ENCODE measurements at regions of chr14 and their contacts with region 1.

Region 1: GRCh38 chr14:49633640-49634546 is 1.2 kb downstream of the DNAAF2 start:
- DNase-seq: peak; percentile 91 to 94 (median 92)
- H3K4me3 ChIP-seq: peak overlapping the region; percentile 90
- H3K27ac ChIP-seq: peak overlapping the region; percentile 83 to 92
- H3K4me1 ChIP-seq: peaks cover 1% of the 10 kb centered on the region
- H3K27me3 ChIP-seq: no peaks in the 10 kb centered on the region
- CTCF ChIP-seq: peak; percentile 29 to 84 (median 78)
- EP300 ChIP-seq: no peak
- POLR2A ChIP-seq: peak; percentile 75

Region 2: DNA sequence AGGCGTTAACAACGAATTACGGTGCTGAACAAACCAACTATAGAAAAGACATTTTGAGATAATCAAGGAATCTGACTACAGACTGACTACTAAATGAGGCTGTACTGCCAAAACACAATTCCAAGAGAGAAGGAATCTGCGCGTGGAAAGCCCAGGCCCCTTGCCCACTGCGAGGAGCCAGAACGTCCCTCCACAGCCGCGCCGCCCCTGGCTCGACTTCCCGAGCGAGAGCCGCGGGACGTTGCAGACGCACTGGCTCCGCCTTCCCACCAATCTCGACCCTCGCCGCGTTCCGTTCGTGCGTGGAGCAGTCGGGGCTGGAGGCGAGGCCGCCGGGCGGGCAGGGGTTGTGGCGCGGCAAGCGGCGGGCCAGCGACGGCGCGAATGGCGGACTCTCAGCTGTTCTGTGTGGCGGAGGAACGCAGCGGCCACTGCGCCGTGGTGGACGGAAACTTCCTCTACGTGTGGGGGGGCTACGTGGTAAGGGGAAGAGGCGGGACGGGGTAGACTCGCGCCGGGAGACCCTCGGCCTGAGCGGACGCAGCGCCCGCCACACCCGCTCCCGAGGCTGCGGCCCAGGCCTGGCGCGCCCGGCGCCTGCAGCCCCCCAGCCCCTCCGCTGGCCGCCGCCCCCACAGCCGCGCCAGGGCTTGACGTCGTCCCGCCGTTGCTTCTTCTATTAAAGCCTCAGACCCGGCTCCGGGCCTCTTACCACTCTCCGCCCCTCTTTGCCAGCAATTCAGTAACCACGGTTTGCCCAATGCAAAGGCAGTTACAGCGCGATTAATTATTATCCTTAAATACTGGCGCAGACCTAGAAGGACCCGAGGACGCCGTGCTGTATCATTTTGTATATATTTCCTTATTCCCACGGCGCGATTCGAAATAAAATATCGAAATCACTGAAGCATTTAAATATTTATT is 59.2 kb after region 1 on chr14 and contains the start of gene KLHDC1:
- intact Hi-C with region 1: loop called in 1 of 4 experiments (anchors 2 kb)
- DNase-seq: peak; percentile 88 to 94 (median 91)
- H3K4me3 ChIP-seq: peak within 1 kb of the TSS; percentile 76
- H3K27ac ChIP-seq: peak within 1 kb of the TSS; percentile 78 to 97
- H3K4me1 ChIP-seq: peaks cover 5% of the 10 kb centered on the region
- H3K27me3 ChIP-seq: no peaks in the 10 kb centered on the region
- CTCF ChIP-seq: peak in 1 of 3 donors; percentile 13
- EP300 ChIP-seq: no peak
- POLR2A ChIP-seq: peak; percentile 95
- total RNA-seq, gene KLHDC1: 8.6 to 22.9 (median 19.3) TPM

Region 3: DNA sequence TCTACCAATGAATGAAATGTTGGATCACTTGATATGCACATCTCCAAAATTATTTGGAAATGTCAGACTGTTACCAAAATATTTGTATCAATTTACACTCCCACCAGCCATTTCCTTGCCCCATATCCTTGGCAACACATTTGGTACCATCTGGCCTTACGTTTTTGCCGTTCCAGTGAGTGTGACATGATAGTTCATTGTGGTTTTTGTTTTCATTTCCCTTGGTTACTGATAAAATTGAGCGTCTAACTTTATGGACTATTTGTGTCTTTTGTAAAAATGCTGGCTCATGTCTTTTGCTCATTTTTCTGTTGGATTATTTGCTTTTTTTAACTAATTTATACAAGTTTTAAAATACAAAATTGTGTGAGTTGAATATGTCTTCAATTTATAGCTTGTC is 70.1 kb after region 1 on chr14:
- intact Hi-C with region 1: no loop called
- DNase-seq: no peak
- H3K4me3 ChIP-seq: no peak overlapping the region
- H3K27ac ChIP-seq: no peak overlapping the region
- H3K4me1 ChIP-seq: peaks cover 1% of the 10 kb centered on the region
- H3K27me3 ChIP-seq: no peaks in the 10 kb centered on the region
- CTCF ChIP-seq: no peak
- EP300 ChIP-seq: no peak
- POLR2A ChIP-seq: no peak

Region 4: DNA sequence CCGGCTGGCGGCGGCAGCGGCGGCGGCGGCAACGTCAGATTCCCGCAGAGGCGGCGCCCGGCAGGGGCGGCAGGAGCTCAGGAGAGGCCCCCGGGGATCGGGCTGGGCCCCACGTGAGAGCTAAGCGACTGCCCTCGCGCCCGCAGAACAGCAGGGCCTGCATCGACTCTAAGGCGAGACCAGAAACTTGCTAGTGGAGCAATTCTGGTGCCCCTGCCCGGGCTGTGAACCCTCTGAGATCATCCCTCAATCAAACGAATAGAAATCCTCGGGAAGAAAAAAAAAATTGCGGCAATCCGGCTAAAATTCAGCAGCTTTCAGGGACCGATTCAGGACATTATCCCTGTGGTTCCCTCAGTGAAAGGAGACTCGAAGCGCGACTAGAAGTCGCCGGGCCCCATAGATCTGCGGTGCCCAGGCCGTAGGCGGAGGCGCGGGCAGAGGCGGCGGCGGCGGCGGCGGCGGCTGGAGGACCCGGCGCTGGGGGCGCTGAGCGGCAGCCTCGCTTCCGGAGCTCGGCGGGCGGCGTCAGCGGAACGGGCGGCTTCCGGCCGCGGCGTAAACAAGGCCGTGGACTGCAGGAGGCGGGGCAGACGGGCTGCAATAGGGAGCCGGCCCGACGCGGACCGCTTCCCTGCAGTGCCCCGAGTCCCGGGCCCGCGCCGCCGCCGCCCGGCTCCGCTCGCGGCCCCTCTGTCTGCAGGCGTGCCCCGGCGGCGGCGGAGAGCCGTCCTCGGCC is 133.8 kb after region 1 on chr14 and contains the start of gene KLHDC2:
- intact Hi-C with region 1: loop called in 2 of 4 experiments (anchors 2 to 10 kb)
- DNase-seq: peak; percentile 86 to 93 (median 89)
- H3K4me3 ChIP-seq: peak within 1 kb of the TSS; percentile 99
- H3K27ac ChIP-seq: peak within 1 kb of the TSS; percentile 84 to 97
- H3K4me1 ChIP-seq: peaks cover 13% of the 10 kb centered on the region
- H3K27me3 ChIP-seq: no peaks in the 10 kb centered on the region
- CTCF ChIP-seq: peak in 1 of 3 donors; percentile 33
- EP300 ChIP-seq: no peak
- POLR2A ChIP-seq: peak; percentile 74
- total RNA-seq, gene KLHDC2: 49.4 to 84.1 (median 70.1) TPM

Region 5: DNA sequence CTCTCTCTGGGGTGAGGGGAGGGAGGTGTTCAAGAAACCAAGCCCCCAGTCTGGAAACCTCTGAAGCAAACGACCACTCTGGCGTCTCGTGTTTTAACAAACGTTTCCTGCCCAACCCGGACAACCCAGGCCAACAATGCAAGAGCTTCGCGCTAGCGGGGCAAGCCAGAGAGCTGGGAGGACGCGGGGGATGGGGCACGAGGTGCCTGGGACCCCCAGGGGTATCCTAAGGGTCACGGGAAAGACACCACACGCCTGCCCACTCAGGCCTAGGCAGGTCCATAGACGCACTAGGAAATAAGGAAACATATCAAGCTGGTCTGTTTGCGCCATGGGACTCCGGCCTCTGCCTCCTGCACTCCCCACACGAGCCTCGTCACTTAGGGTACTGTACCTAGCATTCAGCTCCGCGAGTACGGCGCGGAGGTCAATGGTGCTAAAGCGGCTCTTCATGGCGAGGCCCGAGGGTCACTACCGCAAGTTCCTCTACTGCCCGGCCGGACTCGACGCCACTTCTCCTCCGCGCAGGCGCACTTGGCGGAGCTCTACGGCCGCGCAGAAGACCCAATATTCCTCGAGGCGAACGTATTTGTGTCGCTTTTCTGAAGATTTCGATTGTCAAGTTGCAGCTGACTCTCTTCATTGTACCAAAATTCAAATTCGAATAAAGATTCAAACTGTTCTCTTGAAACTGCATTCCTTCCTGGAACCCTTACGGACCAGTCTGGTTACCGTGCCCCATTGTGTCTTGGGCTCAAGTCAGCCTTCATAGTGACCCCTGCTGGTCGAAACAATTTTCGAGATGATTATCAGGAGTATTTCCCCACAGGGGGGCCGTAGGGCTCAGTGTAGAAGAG is 218.6 kb after region 1 on chr14 and contains the start of gene NEMF:
- intact Hi-C with region 1: loop called in 2 of 4 experiments (anchors 1 to 10 kb)
- DNase-seq: peak; percentile 83 to 93 (median 87)
- H3K4me3 ChIP-seq: peak within 1 kb of the TSS; percentile 84
- H3K27ac ChIP-seq: peak within 1 kb of the TSS; percentile 71 to 73
- H3K4me1 ChIP-seq: no peaks in the 10 kb centered on the region
- H3K27me3 ChIP-seq: no peaks in the 10 kb centered on the region
- CTCF ChIP-seq: peak; percentile 67 to 83 (median 71)
- EP300 ChIP-seq: no peak
- POLR2A ChIP-seq: peak; percentile 43
- total RNA-seq, gene NEMF: 46.9 to 98.9 (median 72.1) TPM

Measured in ovary (tissue), 10 donors.